ENCODE measurements at regions of chr1 and their contacts with region 1.

Region 1: DNA sequence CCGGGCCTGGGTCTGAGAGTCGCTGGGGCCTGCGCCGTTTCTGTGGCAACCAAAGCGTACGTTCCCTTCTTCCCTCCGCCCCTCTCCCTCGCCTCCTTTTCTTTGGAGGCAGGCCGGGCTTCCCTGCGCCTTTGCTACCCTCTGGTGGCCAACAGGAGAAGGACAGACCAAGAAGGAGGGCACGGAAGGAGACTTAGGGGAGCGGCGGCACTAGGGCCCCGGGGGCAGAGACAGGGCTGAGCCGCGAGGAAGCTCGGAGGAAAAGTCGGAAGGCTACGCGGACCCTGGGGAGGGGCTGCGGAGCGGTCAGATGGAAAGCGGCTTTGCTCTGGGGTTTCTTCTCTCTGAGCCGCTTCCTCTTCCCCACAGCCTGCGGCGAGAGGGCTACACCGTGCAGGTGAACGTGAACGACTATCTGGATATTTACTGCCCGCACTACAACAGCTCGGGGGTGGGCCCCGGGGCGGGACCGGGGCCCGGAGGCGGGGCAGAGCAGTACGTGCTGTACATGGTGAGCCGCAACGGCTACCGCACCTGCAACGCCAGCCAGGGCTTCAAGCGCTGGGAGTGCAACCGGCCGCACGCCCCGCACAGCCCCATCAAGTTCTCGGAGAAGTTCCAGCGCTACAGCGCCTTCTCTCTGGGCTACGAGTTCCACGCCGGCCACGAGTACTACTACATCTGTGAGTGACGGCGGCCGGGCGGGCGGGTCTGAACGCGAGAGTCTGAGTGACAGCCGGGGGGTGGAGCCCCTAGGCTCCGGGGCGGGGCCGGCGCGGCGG is 6.3 kb downstream of the EFNA3 start:
- DNase-seq: peak; percentile 96
- CTCF ChIP-seq: peak; percentile 94

Region 2: GRCh38 chr1:155017041-155017945 is 67.6 kb before region 1 on chr1:
- CTCF ChIA-PET with region 1: interaction called, 16 read pairs
- POLR2A ChIA-PET with region 1: interaction called, 4 read pairs
- DNase-seq: peak; percentile 88
- CTCF ChIP-seq: peak; percentile 100

Region 3: DNA sequence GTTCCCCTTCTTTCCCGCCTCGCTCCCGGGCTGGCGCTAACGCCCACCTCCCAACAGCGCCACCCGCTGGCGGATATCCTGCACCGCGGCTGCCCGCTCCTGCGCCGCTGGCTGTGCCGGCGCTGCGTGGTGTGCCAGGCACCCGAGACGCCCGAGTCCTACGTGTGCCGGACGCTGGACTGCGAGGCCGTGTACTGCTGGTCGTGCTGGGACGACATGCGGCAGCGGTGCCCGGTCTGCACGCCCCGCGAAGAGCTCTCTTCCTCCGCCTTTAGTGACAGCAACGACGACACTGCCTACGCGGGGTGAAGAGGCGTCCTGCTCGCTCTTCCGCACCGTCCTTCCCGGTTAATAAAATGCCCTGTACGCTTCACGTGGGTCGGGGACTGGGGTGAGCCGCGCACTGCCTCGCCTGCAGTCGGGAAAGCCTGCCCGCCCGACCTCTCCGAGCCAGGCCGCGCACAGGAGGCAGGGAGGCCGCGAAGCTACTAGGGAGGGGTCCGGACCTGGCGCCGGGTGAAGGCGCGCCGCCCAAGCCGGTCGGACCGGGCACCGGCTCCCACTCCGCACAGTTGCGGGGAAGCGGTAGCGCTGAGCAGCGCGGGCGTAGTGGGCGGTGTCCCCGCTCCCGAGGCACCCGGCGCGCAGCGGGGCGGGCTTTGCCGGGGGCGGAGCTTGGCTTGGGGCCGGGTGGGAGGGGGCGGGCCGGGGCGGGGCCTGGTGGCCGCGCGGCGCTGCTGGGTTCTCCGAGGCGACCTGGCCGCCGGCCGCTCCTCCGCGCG is 34.2 kb before region 1 on chr1 and contains the start of gene ADAM15:
- CTCF ChIA-PET with region 1: interaction called, 169 read pairs
- POLR2A ChIA-PET with region 1: no interaction called
- DNase-seq: peak; percentile 99
- CTCF ChIP-seq: peak; percentile 94

Region 4: GRCh38 chr1:155070721-155071569 is 14.0 kb before region 1 on chr1:
- CTCF ChIA-PET with region 1: interaction called, 169 read pairs
- POLR2A ChIA-PET with region 1: interaction called, 4 read pairs
- DNase-seq: peak; percentile 81
- CTCF ChIP-seq: peak; percentile 26

Region 5: GRCh38 chr1:155128755-155129473 is 44.0 kb after region 1 on chr1:
- CTCF ChIA-PET with region 1: interaction called, 26 read pairs
- POLR2A ChIA-PET with region 1: no interaction called
- DNase-seq: no peak
- CTCF ChIP-seq: no peak

Region 6: DNA sequence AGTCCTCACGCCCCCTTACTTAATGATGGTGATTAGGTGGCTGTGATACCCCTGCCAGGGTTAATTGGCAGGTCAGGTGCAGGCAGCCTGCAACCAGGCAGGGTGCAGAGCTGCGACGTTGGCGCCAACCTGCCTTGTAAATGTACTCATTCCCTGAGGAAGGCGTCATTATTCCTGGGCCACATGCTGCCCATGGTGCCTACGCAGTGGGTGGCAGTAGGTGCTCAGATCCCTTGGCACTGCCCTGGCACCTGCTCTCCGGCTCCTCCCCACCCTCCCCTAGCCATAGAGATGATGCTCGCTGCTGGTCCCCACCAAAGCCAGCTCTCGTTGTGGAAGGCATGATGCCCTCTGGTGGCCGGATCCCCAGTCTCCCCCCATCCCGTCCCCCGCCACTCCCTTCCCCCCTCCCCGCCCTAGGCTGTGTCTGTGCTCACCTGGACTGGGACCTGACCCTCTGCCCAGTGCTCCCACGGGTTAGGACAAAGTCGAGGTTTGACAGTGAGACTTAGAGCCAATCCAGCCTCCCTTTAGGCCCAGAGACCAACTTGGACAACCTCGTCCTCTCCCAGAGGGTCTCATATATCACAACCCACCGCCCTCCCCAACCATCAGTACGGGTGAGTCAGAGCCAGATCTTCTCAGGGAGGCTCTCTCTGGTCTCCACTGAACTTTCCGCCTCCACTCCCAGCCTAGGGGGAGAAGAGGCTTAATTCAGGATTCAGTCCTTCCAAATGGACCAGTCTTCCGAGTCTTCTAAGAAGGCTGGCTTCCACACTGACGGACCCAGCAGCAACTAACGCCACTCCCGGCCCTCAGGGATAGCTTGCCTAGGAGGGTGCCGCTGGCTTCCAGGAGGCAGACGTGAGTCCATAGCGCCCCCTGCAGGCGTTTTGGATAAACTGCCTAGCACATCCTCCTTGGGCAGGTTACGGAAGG is 82.5 kb after region 1 on chr1:
- CTCF ChIA-PET with region 1: interaction called, 184 read pairs
- POLR2A ChIA-PET with region 1: no interaction called
- DNase-seq: peak; percentile 84
- CTCF ChIP-seq: peak; percentile 92

Region 7: GRCh38 chr1:155193275-155193990 is 108.5 kb after region 1 on chr1:
- CTCF ChIA-PET with region 1: interaction called, 10 read pairs
- POLR2A ChIA-PET with region 1: no interaction called
- DNase-seq: peak; percentile 89
- CTCF ChIP-seq: peak; percentile 99

Region 8: DNA sequence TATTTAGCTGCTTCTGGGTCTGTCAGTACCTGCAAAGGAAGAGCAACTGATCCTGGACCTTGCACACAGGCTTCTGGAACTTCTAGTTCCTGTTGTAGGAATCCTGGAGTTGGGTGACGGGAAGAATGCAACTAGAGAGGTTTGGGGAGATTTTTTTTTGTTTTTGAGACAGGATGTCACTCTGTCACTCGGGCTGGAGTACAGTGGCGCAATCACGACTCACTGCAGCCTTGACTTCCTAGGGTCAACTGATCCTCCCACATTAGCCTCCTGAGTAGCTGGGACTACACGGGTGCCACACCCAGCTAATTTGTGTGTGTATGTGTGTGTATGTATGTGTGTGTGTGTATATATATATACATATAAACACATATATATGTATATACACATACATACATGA is 151.5 kb after region 1 on chr1:
- CTCF ChIA-PET with region 1: no interaction called
- POLR2A ChIA-PET with region 1: no interaction called
- DNase-seq: no peak
- CTCF ChIP-seq: no peak

Measured in GM10248 (cell line).